GM18951 (cell line): ENCODE measurements at regions of chr5 and their contacts with region 1.

Region 1: GRCh38 chr5:141992349-141992963 is 20.4 kb downstream of the GNPDA1 start:
- POLR2A ChIP-seq: no peak

Region 2: GRCh38 chr5:142145106-142145900 is 152.8 kb after region 1 on chr5:
- in situ Hi-C with region 1: loop called (anchors 10 kb)
- POLR2A ChIP-seq: no peak

Region 3: DNA sequence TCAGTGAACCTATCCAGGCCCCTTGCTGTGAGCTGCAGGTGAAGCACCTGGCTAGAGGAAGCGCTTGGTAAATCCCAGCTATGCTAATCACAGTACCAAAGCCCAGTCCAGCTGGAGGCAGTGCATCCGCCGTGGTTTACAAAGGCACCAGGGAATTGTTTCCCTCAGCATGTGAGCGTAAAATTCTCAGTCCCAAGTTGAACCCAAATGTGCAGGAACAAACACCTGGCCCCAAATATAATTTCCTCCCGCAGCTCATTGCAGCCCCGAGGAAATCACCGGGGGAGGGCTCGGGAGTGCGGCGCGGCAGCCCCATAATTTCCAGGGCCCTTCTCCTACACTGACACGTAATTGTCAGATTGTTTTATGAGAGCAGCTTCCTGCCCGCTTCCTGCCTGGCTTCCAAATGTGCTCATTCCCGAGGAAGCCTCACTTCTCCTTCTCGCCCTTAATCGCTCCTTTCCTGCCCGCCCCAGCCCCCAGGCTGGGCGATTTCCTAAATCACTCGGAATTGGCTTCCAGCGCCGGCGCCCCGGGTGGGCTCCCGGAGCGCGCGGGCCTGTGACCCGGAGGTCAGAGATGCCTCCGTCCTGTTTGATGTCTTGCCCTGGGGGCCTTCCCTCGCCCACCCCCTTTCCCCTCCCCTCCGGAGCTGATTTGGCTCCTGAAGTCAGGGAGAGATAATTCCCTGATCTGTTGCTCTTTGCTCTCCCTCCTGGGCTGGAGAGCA is 559.0 kb after region 1 on chr5:
- in situ Hi-C with region 1: loop called (anchors 25 kb)
- POLR2A ChIP-seq: no peak